ENCODE measurements at regions of chr9 and their contacts with region 1.

Region 1: DNA sequence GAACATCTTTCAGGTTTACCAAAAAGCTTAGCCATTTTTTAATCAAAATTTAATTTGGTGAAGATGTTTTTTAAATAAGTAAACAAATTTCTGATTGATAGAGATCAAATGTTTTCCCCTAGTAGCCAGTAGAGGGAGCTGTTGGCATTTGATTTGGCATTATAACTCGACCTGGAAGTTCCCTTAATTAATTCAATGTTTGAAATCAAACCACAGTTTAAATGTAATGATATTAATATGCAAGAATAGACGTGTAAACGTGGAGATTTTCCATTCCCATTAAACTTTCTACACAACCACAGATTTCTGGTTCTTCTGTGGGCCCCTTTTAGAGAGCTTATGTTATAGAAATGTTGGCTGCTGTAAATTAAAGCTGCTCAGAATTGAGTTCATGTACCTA is 148.1 kb upstream of the MPDZ start:
- DNase-seq: no peak
- ATAC-seq: peak in 1 of 2 donors; percentile 53

Region 2: DNA sequence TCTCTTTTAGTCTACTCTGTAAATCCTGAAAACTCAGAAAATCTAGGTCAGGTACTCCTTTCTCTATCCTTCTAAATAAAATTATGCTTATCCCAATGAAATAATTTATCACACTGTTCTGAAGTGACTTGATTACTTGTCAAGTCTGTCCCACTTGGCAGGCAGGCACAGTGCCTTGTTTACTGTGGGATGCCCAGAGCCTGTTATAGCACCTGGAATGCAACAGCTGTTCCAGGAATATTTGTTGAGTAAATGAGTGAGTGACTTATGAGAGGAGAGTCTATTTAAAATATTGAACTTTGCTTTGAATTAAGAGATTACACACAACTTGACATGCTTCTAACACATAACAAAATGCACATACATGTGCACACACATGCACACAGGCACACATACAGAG is 278.1 kb before region 1 on chr9:
- intact Hi-C with region 1: no loop called
- DNase-seq: peak; percentile 26
- ATAC-seq: peak; percentile 73 to 76

Region 3: DNA sequence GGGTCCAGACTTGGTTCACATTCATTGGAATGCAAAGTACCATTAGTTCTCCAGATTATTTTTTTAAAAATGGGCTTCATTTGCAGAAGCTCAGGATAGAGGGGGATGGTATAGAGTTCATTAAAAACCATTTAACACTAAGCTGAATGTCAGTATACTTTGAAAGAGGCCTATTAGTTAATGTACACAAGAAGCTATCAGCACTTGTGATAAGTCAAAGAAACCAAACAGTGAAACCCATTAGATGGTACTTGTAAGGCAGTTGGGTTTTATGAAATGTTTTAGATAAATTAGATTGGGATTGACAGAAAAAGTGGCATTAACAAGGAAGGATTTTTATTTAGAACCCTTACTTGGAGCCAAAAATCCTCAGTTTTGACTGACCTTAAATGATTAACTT is 81.1 kb after region 1 on chr9:
- intact Hi-C with region 1: no loop called
- DNase-seq: no peak
- ATAC-seq: no peak

Region 4: DNA sequence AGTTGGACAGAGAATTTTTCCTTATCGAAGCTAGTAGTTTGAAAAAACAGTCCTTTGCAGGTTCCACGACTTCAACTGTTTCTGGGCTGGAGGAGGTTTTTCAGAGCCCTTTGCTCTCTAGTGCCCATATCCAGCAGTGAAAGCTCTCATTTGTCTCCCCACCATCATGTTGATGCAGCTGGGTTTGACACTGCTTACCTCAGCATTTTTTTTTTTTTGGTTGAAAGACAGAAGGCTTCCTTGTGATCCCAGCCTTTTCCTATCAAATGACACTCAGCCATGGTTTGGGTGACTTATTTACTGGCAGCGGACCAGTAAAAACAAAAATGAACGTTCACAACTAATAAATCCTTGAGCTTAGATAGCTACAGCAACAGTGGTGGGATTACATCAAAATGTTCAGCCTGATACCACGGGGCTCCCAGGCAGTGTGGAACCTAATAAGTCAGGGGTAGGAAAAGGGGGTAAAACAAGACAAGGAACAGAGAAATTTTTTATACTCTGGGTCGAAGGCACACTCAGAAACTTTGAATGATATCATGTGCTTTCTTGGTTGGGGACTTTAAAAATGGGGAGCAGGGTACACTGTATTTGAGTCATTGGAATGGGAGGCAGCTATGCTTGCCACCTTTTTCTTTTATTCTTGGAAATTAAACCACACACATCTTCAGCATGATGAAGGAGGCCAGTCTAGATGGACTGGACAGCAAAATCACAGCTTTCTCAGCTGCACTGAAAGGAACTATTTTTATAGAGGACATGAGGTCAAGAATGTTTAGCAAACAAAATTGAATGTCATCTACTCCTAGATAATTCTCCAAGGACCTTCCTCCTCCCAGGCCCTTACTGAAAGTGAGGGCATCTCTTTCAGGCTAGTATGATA is 160.8 kb after region 1 on chr9:
- intact Hi-C with region 1: loop called in 1 of 2 experiments (anchors 5 kb)
- DNase-seq: no peak
- ATAC-seq: peak; percentile 38 to 63

Region 5: GRCh38 chr9:13688994-13689600 is 261.5 kb after region 1 on chr9:
- intact Hi-C with region 1: loop called in 1 of 2 experiments (anchors 5 kb)
- DNase-seq: no peak
- ATAC-seq: no peak

Region 6: DNA sequence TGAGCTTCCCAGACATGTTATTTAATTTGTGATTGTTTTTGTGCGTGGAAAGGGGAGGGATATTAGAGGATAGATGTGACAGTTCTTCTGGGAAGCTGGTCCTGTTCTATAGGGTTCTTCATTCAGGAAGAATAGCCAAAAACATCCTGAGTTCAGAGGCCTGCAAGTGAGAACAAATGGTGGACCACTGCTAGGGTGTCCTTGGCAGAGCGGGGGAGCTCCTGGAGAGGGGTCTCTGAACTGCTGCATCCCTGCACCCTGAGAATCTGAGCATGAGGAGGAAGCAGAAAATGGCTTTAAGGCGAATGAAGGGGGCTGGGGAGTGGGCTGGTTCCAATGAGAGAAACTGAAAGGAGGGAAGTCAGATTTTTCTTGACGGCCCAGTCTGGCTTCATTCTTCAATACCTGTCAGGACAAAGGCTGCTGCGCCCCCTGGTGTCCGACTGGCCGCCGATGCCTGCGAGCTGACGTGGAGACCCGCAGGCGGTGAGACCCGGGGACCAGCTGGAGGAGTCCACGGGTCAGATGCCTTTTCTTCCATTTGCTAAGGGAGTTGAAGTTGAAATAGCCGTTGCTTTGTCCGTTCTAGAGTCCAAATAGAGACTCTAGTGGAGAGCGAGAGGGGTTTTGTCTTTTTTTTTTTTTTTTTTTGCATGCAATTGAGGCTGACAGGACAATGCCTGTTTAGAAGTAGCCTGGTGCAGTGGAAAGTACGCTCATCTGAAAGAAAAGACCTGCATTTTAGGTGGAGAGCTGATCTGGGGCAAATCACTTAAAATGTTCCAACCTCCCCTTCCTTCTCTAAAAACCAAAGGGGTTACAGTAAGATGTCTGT is 925.9 kb after region 1 on chr9:
- intact Hi-C with region 1: loop called (anchors 2 to 5 kb)
- DNase-seq: peak; percentile 95
- ATAC-seq: peak; percentile 76

Region 7: DNA sequence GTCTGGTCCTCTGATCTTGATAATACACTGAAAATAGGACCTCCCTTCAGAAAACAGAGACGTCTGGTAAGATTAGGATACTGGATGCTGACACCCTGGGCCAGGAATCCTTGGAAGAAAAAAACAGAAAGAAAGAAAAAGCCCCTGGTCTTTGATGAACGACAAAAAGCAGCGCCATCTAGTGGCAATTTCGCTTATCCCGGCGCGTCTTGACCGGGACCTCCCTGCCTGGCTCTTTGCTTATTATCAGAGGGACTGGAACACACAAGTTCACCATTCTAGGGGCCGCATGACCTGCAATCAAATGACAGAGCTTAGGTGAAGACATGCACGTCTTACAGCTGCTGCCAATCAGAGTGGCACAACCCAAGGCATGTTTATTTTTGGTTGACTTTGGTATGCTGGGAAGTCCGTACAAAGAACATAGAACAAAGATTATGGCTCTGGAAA is 1001.2 kb after region 1 on chr9:
- intact Hi-C with region 1: loop called (anchors 10 kb)
- DNase-seq: peak; percentile 80
- ATAC-seq: peak; percentile 56 to 59

Measured in left cardiac atrium (tissue), 4 donors.